ENCODE measurements at regions of chr16 and their contacts with region 1.

Region 1: GRCh38 chr16:79269211-79269863 is 331.2 kb downstream of the MAF start:
- DNase-seq: peak; percentile 86
- ATAC-seq: peak; percentile 70
- H3K4me3 Mint-ChIP-seq: peak overlapping the region; percentile 19
- H3K27ac Mint-ChIP-seq: peak overlapping the region; percentile 86
- H3K4me1 Mint-ChIP-seq: peaks cover 89% of the 10 kb centered on the region
- H3K27me3 Mint-ChIP-seq: peaks cover 26% of the 10 kb centered on the region

Region 2: DNA sequence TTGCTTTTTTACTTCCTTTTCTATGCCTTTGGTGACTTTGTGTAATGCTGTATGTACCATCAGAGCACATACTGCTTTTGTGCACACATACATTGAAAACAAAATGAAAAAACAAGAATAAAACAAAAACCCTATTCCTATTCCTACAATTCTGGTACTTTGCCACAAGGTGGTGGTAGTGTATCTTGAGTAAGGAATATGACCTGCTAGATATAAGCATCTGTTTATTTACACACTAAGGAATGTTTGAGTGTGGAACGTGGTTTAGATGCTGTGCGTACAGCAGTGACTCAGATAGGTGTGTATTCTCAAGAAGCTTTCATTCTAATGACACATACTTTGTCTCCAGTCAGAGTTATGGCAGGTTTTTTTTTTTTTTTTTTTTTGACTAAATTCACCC is 563.6 kb before region 1 on chr16:
- CTCF ChIA-PET with region 1: no interaction called
- POLR2A ChIA-PET with region 1: no interaction called
- intact Hi-C with region 1: loop called (anchors 1 to 10 kb)
- DNase-seq: peak; percentile 30
- ATAC-seq: peak; percentile 99
- H3K4me3 Mint-ChIP-seq: no peak overlapping the region
- H3K27ac Mint-ChIP-seq: no peak overlapping the region
- H3K4me1 Mint-ChIP-seq: peaks cover 13% of the 10 kb centered on the region
- H3K27me3 Mint-ChIP-seq: no peaks in the 10 kb centered on the region

Region 3: DNA sequence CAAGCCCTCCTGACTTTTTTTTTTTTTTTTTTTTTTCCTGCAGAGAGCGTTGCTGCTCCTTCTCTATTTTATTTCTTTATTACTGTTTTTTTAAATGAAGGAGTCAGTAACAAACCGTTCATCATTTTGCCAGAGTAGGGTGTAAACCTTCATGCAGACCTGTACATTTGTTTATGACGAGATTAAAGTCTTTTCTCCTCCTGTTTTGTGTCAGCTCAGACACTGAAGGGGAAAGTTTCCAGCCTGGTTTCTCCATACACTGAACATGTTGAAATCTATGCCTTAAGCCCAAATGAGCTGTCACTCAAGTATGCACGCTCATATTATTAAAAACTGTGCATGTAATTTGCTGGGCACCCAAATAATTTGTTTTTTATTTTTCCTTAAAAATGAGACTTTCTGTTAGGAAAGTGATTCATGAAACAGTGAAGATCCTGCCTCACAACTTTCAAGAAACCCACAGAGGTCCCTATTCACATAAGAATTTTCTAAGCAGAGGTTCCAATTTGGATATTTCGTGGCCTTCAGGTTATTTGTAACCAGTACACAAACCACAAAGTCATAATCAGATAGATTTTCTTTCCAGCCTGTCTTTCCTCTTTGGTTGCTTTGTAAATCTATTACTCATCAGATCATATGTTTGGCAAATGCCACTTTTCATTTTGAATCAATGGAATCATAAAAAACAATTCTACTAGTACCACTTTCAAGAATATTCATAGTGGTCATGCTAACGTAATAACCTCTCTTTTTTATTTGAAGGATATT is 369.1 kb before region 1 on chr16:
- CTCF ChIA-PET with region 1: interaction called, 4 read pairs
- POLR2A ChIA-PET with region 1: no interaction called
- intact Hi-C with region 1: loop called (anchors 5 kb)
- DNase-seq: no peak
- ATAC-seq: peak; percentile 55
- H3K4me3 Mint-ChIP-seq: no peak overlapping the region
- H3K27ac Mint-ChIP-seq: peak overlapping the region; percentile 80
- H3K4me1 Mint-ChIP-seq: peaks cover 52% of the 10 kb centered on the region
- H3K27me3 Mint-ChIP-seq: no peaks in the 10 kb centered on the region

Region 4: GRCh38 chr16:79008036-79008868 is 261.1 kb before region 1 on chr16:
- CTCF ChIA-PET with region 1: no interaction called
- POLR2A ChIA-PET with region 1: no interaction called
- intact Hi-C with region 1: loop called in 1 of 2 experiments (anchors 5 kb)
- DNase-seq: peak; percentile 49
- ATAC-seq: peak; percentile 76
- H3K4me3 Mint-ChIP-seq: no peak overlapping the region
- H3K27ac Mint-ChIP-seq: peak overlapping the region; percentile 79
- H3K4me1 Mint-ChIP-seq: peaks cover 35% of the 10 kb centered on the region
- H3K27me3 Mint-ChIP-seq: no peaks in the 10 kb centered on the region

Region 5: GRCh38 chr16:79089735-79090284 is 179.5 kb before region 1 on chr16:
- CTCF ChIA-PET with region 1: interaction called, 3 read pairs
- POLR2A ChIA-PET with region 1: no interaction called
- intact Hi-C with region 1: loop called (anchors 1 kb)
- DNase-seq: peak; percentile 82
- ATAC-seq: peak; percentile 70
- H3K4me3 Mint-ChIP-seq: peak overlapping the region; percentile 66
- H3K27ac Mint-ChIP-seq: peak overlapping the region; percentile 95
- H3K4me1 Mint-ChIP-seq: peaks cover 57% of the 10 kb centered on the region
- H3K27me3 Mint-ChIP-seq: no peaks in the 10 kb centered on the region

Region 6: GRCh38 chr16:79286646-79287423 is 17.5 kb after region 1 on chr16:
- CTCF ChIA-PET with region 1: interaction called, 7 read pairs
- POLR2A ChIA-PET with region 1: interaction called, 7 read pairs
- intact Hi-C with region 1: loop called (anchors 1 kb)
- DNase-seq: peak; percentile 63
- ATAC-seq: peak; percentile 70
- H3K4me3 Mint-ChIP-seq: peak overlapping the region; percentile 34
- H3K27ac Mint-ChIP-seq: peak overlapping the region; percentile 86
- H3K4me1 Mint-ChIP-seq: peaks cover 52% of the 10 kb centered on the region
- H3K27me3 Mint-ChIP-seq: peaks cover 12% of the 10 kb centered on the region

Region 7: GRCh38 chr16:79845033-79845733 is 575.8 kb after region 1 on chr16:
- CTCF ChIA-PET with region 1: no interaction called
- POLR2A ChIA-PET with region 1: no interaction called
- intact Hi-C with region 1: loop called in 1 of 2 experiments (anchors 5 kb)
- DNase-seq: peak; percentile 47
- ATAC-seq: peak; percentile 45
- H3K4me3 Mint-ChIP-seq: no peak overlapping the region
- H3K27ac Mint-ChIP-seq: peak overlapping the region; percentile 74
- H3K4me1 Mint-ChIP-seq: peaks cover 32% of the 10 kb centered on the region
- H3K27me3 Mint-ChIP-seq: peaks cover 10% of the 10 kb centered on the region

Measured in activated CD4-positive, alpha-beta T cell treated with anti-CD3 and anti-CD28 coated beads for 36 hours (primary cell).